Activated CD8-positive, alpha-beta memory T cell treated with anti-CD3 and anti-CD28 coated beads, Interleukin-2, amount 10 ng/mL, durations not matched to agents 7 days and 5 days (primary cell): ENCODE measurements at regions of chr17 and their contacts with region 1.

Region 1: DNA sequence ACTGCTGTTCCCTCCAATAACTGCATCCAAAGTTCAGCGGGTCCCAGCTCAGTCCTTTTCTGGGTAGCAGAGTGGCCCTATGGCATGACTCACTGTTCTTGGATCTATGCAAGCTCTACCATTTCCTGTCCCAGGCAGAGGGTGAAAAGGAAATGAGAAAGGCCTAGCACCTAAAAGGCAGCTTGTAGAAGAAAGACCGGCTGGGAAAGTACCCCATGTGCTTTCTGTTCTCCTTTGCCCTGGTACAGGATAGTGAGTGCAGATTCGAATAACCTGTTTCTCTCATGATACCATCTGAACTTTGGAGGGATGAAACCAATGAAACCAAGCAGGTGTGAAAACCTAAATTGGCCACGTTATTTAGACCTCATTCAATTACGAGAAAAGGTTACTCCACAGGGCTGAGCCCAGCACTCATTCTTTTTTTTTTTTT is 12.7 kb upstream of the HASPIN start:
- DNase-seq: peak; percentile 90
- ATAC-seq: peak; percentile 99
- H3K4me3 Mint-ChIP-seq: peak overlapping the region; percentile 35
- H3K27ac Mint-ChIP-seq: peak overlapping the region; percentile 83
- H3K4me1 Mint-ChIP-seq: peaks cover 54% of the 10 kb centered on the region
- H3K27me3 Mint-ChIP-seq: no peaks in the 10 kb centered on the region

Region 2: DNA sequence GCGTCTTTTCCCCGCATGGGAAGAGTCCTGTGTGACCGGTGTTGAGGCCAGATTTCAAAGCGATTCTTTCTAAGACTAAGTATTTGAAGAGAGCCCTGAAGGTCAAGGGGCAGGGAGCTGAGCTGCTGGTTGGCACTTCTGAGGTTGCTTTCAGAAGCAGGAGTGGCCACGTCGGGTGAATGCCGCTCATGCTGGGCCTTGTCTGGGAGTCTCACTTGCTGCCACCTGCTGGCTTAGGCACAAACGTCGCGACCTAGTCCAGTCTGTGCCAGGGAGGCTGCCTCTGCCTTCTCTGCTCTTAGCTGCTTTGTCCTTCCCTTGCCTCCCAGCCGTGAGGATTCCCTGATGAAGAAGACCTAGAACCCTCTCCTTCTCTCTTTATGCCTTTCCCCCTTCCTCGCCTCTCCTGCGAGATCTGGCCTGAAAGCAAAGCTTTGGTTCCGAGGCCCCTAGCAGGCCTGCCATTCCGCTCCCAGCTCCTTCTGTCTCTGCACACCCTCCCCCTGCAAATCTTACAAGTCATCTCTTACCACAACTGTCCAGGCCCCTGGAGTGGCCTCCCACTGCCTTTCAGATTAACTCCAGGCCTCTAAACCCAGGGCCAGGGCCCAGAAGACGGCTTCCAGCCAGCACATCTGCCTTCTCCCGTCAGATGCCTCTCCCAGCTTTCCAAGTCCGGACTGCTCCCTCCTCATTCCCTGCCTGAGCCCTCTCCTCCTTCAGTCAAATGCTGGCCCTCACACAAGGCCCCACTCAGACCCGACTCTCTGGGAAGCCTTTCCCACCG is 63.0 kb before region 1 on chr17:
- CTCF ChIA-PET with region 1: no interaction called
- DNase-seq: peak; percentile 57
- ATAC-seq: peak; percentile 61
- H3K4me3 Mint-ChIP-seq: no peak overlapping the region
- H3K27ac Mint-ChIP-seq: no peak overlapping the region
- H3K4me1 Mint-ChIP-seq: peaks cover 17% of the 10 kb centered on the region
- H3K27me3 Mint-ChIP-seq: no peaks in the 10 kb centered on the region

Region 3: DNA sequence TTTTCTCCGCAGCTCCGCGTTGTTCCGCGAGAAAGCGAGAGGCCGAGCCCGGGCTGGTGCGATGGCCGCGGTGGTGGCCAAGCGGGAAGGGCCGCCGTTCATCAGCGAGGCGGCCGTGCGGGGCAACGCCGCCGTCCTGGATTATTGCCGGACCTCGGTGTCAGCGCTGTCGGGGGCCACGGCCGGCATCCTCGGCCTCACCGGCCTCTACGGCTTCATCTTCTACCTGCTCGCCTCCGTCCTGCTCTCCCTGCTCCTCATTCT is 41.9 kb before region 1 on chr17:
- CTCF ChIA-PET with region 1: no interaction called
- DNase-seq: no peak
- ATAC-seq: no peak
- H3K4me3 Mint-ChIP-seq: peak overlapping the region; percentile 95
- H3K27ac Mint-ChIP-seq: peak overlapping the region; percentile 91
- H3K4me1 Mint-ChIP-seq: peaks cover 24% of the 10 kb centered on the region
- H3K27me3 Mint-ChIP-seq: no peaks in the 10 kb centered on the region

Region 4: DNA sequence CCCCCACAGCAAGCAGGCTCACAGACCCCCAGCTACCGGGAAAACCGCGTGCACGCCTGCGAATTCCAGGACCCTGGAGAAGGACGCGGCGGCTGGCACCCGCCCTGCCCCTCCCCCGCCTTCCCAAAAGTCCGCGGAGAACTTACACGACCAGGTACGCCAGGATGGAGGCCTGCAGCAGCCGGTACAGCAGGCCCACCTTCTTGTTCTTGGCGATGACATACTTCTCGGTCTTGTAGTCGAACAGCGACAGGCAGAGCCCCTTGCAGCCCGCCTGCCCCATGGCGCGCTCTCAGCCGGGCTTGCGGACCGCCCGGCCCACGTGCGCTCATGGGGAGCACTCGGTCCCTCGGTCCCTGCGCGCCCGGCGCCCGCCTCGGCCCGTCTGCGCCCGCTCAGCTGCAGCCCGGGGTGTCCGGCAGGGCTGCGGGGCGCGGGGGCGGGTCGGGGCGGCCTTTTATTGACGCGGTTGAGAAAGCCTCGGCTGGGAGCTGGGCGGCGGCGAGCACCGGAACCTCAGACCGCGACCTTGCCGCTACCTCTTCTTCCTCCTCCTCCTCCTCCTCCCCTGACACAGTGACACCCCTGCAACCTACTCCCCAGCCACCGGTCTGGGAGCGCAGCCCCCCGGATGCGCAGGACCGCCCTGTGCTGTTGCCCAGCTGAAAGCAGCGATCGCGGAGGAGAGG is 15.1 kb before region 1 on chr17 and contains the start of gene P2RX5:
- CTCF ChIA-PET with region 1: interaction called, 23 read pairs
- DNase-seq: peak; percentile 76
- ATAC-seq: peak; percentile 76
- H3K4me3 Mint-ChIP-seq: peak within 1 kb of the TSS; percentile 85
- H3K27ac Mint-ChIP-seq: peak within 1 kb of the TSS; percentile 88
- H3K4me1 Mint-ChIP-seq: peaks cover 33% of the 10 kb centered on the region
- H3K27me3 Mint-ChIP-seq: no peaks in the 10 kb centered on the region
- total RNA-seq, gene P2RX5: 18.1 to 24.6 TPM

Region 5: DNA sequence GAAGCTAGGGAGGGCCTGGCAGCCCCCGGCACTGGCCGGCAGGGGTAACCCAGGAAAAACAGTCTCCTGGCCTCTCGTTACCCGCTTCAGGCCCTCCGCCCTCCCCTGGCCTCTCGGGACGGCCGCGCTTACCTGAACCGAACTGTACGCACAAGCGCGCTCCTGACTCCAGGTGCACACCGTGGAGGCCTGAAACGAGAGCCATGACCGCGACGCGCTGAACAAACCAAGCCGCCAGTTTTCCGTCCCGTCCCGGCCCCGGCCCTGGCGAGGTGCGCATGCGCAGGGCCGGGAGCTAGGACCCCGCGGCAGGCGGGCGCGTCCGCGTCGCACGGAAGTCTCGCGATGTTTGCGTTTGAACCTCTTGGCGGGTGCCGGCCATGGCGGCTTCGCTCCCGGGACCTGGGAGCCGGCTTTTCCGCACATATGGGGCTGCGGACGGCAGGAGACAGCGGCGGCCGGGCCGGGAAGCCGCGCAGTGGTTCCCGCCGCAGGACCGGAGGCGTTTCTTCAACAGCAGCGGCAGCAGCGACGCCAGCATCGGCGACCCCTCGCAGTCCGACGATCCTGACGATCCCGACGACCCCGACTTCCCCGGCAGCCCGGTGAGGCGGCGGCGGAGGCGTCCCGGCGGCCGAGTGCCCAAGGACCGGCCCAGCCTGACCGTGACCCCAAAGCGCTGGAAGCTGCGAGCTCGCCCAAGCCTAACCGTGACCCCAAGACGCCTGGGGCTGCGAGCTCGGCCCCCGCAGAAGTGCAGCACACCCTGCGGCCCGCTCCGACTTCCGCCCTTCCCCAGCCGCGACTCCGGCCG is 12.8 kb after region 1 on chr17 and contains the start of gene HASPIN:
- CTCF ChIA-PET with region 1: interaction called, 17 read pairs
- DNase-seq: peak; percentile 94
- ATAC-seq: peak; percentile 94
- H3K4me3 Mint-ChIP-seq: peak within 1 kb of the TSS; percentile 95
- H3K27ac Mint-ChIP-seq: peak within 1 kb of the TSS; percentile 89
- H3K4me1 Mint-ChIP-seq: peaks cover 63% of the 10 kb centered on the region
- H3K27me3 Mint-ChIP-seq: no peaks in the 10 kb centered on the region
- total RNA-seq, gene HASPIN: 30.4 to 31.2 TPM

Region 6: DNA sequence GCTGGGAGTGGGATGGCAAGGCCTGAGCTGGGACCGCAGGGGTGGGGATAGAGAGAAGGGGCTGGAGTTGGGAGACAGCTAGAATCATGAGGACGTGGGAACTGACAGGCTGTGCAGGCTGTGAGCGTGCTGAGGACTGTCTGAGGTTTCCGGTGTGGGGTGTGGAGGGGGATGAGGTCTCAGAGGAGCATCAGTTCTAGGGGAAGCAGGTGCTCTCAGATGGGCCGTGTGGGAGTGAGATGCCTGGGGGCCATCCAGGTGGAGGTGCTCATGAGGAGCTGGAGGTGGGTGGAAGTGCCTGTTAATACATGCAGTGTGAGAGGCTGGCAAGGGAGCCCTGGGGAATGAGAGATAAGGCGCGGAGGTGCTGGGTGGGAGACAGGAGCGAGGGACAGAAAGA is 40.0 kb after region 1 on chr17:
- CTCF ChIA-PET with region 1: no interaction called
- DNase-seq: peak; percentile 87
- ATAC-seq: peak; percentile 76
- H3K4me3 Mint-ChIP-seq: peak overlapping the region; percentile 66
- H3K27ac Mint-ChIP-seq: peak overlapping the region; percentile 90
- H3K4me1 Mint-ChIP-seq: peaks cover 46% of the 10 kb centered on the region
- H3K27me3 Mint-ChIP-seq: no peaks in the 10 kb centered on the region

Region 7: DNA sequence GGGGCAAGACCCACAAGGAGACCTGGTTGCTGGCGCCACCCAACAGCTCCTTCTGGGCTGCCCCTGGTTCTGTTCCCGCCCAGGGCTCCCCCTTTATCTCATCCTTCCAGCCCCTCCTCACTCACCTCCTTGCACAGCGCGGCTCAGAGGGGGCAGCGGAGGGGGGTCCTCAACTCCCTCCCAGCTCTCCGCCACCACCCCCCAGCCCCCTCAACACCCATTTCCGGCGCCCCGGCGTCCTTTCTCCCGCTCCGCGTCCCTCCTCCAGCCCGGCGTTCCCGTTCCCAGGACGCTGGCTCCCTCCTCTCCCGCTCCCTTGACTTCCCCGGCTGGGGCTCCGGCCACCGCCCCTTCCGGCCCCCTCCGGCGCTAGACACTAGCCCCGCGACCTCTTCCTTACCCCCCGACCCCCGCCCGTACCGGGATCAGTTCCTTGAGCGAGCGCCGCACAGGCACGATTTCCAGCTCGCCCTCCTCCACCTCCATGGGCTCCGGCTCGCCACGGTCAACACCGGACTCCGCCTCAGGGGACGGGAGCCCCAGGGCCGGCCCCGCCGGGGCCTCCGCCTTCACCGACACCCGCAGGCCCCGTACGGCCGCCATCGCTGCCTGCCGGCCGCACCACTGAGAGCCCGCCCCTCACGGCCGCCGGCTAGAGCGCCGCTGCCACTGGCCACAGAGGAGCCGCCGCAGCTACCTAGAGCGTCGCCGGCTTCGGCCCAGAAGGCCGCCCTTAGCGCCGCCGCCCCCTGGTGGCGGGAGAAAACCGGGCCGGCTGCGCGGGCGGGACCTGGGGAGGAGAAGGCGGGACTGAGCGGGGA is 134.9 kb after region 1 on chr17 and contains the start of gene NCBP3:
- CTCF ChIA-PET with region 1: interaction called, 12 read pairs
- DNase-seq: peak; percentile 92
- ATAC-seq: peak; percentile 95
- H3K4me3 Mint-ChIP-seq: peak within 1 kb of the TSS; percentile 98
- H3K27ac Mint-ChIP-seq: peak within 1 kb of the TSS; percentile 94
- H3K4me1 Mint-ChIP-seq: peaks cover 25% of the 10 kb centered on the region
- H3K27me3 Mint-ChIP-seq: peaks cover 12% of the 10 kb centered on the region
- total RNA-seq, gene NCBP3: 46.3 to 48.7 TPM

Region 8: GRCh38 chr17:3944485-3945388 is 233.8 kb after region 1 on chr17:
- CTCF ChIA-PET with region 1: no interaction called
- DNase-seq: no peak
- ATAC-seq: peak; percentile 71
- H3K4me3 Mint-ChIP-seq: no peak overlapping the region
- H3K27ac Mint-ChIP-seq: no peak overlapping the region
- H3K4me1 Mint-ChIP-seq: no peaks in the 10 kb centered on the region
- H3K27me3 Mint-ChIP-seq: no peaks in the 10 kb centered on the region